Naive thymus-derived CD4-positive, alpha-beta T cell (primary cell): ENCODE measurements at regions of chr3 and their contacts with region 1.

Region 1: DNA sequence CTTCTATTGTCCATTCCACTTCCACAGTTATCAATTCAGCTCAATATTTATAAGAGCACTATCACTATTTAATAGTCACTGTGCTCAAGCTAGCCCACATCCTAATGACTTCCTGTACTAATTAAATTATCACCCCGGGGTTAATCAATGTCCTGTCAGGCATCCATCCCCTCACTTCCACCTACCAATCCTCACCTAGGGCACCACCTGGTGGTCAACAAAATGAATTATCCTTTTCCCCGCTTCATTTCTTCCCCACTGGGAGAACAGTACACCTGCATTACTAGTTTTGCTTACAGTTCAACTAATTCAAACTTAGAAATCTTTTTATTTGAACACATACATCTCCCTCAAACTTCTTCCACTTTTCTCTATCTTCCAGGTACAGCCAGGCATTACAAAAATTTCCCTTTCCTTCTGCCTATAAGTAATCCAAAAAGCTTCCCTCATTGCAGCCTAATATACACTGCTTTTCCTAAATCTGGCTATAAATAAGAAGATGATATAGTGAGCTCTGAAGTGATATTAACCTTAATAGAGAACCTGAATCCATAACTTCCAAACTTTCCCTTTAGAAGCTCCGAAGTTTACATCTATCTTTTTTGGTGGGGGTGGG is 68.5 kb downstream of the TMCC1 start:
- DNase-seq: peak in 8 of 9 donors; percentile 20 to 52 (median 40)
- ATAC-seq: peak; percentile 53
- H3K4me3 ChIP-seq: no peak overlapping the region
- H3K4me3 Mint-ChIP-seq: no peak overlapping the region
- H3K27ac ChIP-seq: no peak overlapping the region
- H3K27ac Mint-ChIP-seq: no peak overlapping the region
- H3K4me1 ChIP-seq: peaks cover 0 to 7% of the 10 kb centered on the region in 2 donors
- H3K4me1 Mint-ChIP-seq: peaks cover 12 to 26% (median 23%) of the 10 kb centered on the region in 7 donors
- H3K27me3 ChIP-seq: no peaks in the 10 kb centered on the region
- H3K27me3 Mint-ChIP-seq: no peaks in the 10 kb centered on the region

Region 2: GRCh38 chr3:129383292-129383860 is 441.7 kb before region 1 on chr3:
- CTCF ChIA-PET with region 1: no interaction called
- POLR2A ChIA-PET with region 1: no interaction called
- intact Hi-C with region 1: loop called in 1 of 2 experiments (anchors 5 kb)
- DNase-seq: peak in 7 of 9 donors; percentile 21 to 40 (median 30)
- ATAC-seq: peak; percentile 92
- H3K4me3 ChIP-seq: no peak overlapping the region
- H3K4me3 Mint-ChIP-seq: no peak overlapping the region
- H3K27ac ChIP-seq: no peak overlapping the region
- H3K27ac Mint-ChIP-seq: peak overlapping the region in 2 of 9 donors; percentile 49 to 92
- H3K4me1 ChIP-seq: no peaks in the 10 kb centered on the region
- H3K4me1 Mint-ChIP-seq: peaks cover 0 to 4% (median 0%) of the 10 kb centered on the region in 7 donors
- H3K27me3 ChIP-seq: no peaks in the 10 kb centered on the region
- H3K27me3 Mint-ChIP-seq: no peaks in the 10 kb centered on the region

Region 3: GRCh38 chr3:129399145-129399894 is 425.7 kb before region 1 on chr3:
- CTCF ChIA-PET with region 1: no interaction called
- POLR2A ChIA-PET with region 1: no interaction called
- intact Hi-C with region 1: loop called (anchors 5 kb)
- DNase-seq: peak; percentile 34 to 89 (median 81)
- ATAC-seq: peak; percentile 91
- H3K4me3 ChIP-seq: peak overlapping the region; percentile 70
- H3K4me3 Mint-ChIP-seq: peak overlapping the region; percentile 89 to 100 (median 97)
- H3K27ac ChIP-seq: peak overlapping the region; percentile 88
- H3K27ac Mint-ChIP-seq: peak overlapping the region; percentile 94 to 100 (median 98)
- H3K4me1 ChIP-seq: peaks cover 10 to 13% of the 10 kb centered on the region in 2 donors
- H3K4me1 Mint-ChIP-seq: peaks cover 23 to 47% (median 37%) of the 10 kb centered on the region in 7 donors
- H3K27me3 ChIP-seq: no peaks in the 10 kb centered on the region
- H3K27me3 Mint-ChIP-seq: no peaks in the 10 kb centered on the region

Region 4: DNA sequence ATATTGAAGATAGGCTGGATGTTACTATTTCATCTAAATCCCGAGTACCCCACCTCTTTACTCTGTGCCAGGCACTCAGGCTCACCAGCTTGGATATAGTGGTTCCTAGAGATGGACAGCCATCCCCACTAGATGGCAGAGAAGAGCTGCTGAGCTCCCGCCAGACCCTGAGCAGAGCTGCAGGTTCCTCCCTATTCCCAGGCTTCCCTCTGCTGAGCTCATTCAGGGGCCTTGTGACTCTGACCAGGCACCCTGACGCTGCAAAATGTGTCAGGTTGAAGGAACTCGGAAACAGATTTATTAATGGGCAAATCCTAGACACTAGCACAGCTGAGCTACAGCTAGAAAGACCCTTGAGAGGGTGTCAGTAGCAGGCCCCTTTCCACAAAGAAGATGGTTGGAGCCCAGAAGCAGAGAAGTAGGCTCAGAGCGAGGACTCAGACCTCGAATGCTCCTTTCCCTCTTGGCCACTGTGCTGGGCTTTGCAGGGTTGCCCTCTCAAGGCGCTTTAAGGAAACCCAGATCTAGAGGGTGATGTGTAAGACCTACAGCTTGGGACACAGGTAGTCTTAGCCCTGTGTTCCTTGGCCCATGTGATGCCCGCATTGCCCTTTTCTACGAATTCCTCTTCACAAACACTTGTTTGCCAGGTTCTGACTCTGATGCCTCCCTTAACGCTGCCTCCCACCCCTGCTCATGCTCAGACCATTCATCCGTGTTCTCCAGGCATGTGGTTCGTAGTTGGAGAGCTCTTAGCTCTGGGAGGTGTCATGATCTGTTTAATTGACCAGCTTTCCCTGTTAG is 334.6 kb before region 1 on chr3:
- CTCF ChIA-PET with region 1: interaction called, 10 read pairs
- POLR2A ChIA-PET with region 1: no interaction called
- intact Hi-C with region 1: loop called (anchors 1 kb)
- DNase-seq: peak in 8 of 9 donors; percentile 16 to 56 (median 40)
- ATAC-seq: peak; percentile 91
- H3K4me3 ChIP-seq: no peak overlapping the region
- H3K4me3 Mint-ChIP-seq: no peak overlapping the region
- H3K27ac ChIP-seq: no peak overlapping the region
- H3K27ac Mint-ChIP-seq: no peak overlapping the region
- H3K4me1 ChIP-seq: no peaks in the 10 kb centered on the region
- H3K4me1 Mint-ChIP-seq: peaks cover 0 to 3% (median 0%) of the 10 kb centered on the region in 7 donors
- H3K27me3 ChIP-seq: no peaks in the 10 kb centered on the region
- H3K27me3 Mint-ChIP-seq: no peaks in the 10 kb centered on the region

Region 5: DNA sequence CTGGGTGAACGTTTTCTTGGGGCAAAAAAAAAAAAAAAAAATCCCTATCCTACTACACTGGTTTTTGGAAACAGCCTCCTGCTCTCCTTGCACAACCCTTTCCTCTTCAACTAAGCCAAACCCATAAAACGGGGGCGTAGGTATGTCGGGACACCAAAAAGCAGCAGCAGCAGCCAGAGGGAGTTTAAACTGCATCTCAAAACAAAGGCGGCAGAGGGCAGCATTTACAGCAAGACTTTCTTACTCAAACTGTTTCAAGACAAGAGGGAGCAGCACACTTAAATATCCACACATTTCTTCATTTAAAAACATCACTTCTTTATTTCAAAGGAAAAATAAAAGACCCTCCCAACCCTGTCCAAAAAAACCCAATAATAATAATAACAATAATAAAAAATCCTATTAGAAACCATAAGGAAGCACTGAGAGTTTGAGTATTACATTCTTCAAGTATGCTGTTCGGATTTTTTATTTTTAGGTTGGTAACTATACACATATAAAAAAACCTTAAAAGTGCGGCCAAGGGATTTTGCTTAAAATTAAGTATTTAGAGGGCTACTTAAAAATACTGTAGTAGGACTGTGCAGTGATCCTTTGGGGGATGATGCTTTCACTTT is 174.7 kb before region 1 on chr3:
- CTCF ChIA-PET with region 1: interaction called, 3 read pairs
- POLR2A ChIA-PET with region 1: no interaction called
- intact Hi-C with region 1: loop called (anchors 1 kb)
- DNase-seq: peak in 8 of 9 donors; percentile 8 to 57 (median 42)
- ATAC-seq: peak; percentile 62
- H3K4me3 ChIP-seq: no peak overlapping the region
- H3K4me3 Mint-ChIP-seq: no peak overlapping the region
- H3K27ac ChIP-seq: no peak overlapping the region
- H3K27ac Mint-ChIP-seq: peak overlapping the region in 2 of 9 donors; percentile 12 to 38
- H3K4me1 ChIP-seq: no peaks in the 10 kb centered on the region
- H3K4me1 Mint-ChIP-seq: peaks cover 0 to 4% (median 1%) of the 10 kb centered on the region in 7 donors
- H3K27me3 ChIP-seq: no peaks in the 10 kb centered on the region
- H3K27me3 Mint-ChIP-seq: peaks cover 0 to 4% (median 0%) of the 10 kb centered on the region in 5 donors

Region 6: DNA sequence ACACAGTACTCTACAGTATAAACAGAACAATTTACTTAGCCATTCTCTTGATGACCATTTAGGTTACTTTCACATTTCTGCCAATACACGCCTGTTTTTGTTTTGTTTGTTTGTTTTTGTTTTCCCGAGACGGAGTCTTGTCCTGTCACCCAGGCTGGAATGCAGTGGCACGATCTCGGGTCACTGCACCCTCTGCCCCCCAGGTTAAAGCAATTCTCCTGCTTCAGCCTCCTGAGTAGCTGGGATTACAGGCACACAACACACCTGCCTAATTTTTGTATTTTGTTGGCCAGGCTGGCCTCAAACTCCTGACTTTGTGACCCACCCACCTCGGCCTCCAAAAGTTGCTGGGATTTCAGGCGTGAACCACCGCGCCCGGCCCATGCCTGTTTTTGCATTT is 23.7 kb before region 1 on chr3:
- CTCF ChIA-PET with region 1: no interaction called
- POLR2A ChIA-PET with region 1: no interaction called
- intact Hi-C with region 1: no loop called
- DNase-seq: no peak
- ATAC-seq: no peak
- H3K4me3 ChIP-seq: no peak overlapping the region
- H3K4me3 Mint-ChIP-seq: peak overlapping the region in 1 of 10 donors; percentile 23
- H3K27ac ChIP-seq: no peak overlapping the region
- H3K27ac Mint-ChIP-seq: no peak overlapping the region
- H3K4me1 ChIP-seq: no peaks in the 10 kb centered on the region
- H3K4me1 Mint-ChIP-seq: peaks cover 0 to 25% (median 10%) of the 10 kb centered on the region in 7 donors
- H3K27me3 ChIP-seq: no peaks in the 10 kb centered on the region
- H3K27me3 Mint-ChIP-seq: no peaks in the 10 kb centered on the region

Region 7: GRCh38 chr3:129845956-129846355 is 20.9 kb after region 1 on chr3:
- CTCF ChIA-PET with region 1: interaction called, 3 read pairs
- POLR2A ChIA-PET with region 1: no interaction called
- intact Hi-C with region 1: loop called in 1 of 2 experiments (anchors 1 kb)
- DNase-seq: no peak
- ATAC-seq: no peak
- H3K4me3 ChIP-seq: no peak overlapping the region
- H3K4me3 Mint-ChIP-seq: no peak overlapping the region
- H3K27ac ChIP-seq: no peak overlapping the region
- H3K27ac Mint-ChIP-seq: peak overlapping the region in 2 of 9 donors; percentile 39 to 56
- H3K4me1 ChIP-seq: no peaks in the 10 kb centered on the region
- H3K4me1 Mint-ChIP-seq: peaks cover 0 to 30% (median 15%) of the 10 kb centered on the region in 7 donors
- H3K27me3 ChIP-seq: no peaks in the 10 kb centered on the region
- H3K27me3 Mint-ChIP-seq: no peaks in the 10 kb centered on the region

Region 8: GRCh38 chr3:129934234-129935123 is 109.4 kb after region 1 on chr3:
- CTCF ChIA-PET with region 1: interaction called, 7 read pairs
- POLR2A ChIA-PET with region 1: no interaction called
- intact Hi-C with region 1: loop called (anchors 1 to 2 kb)
- DNase-seq: peak in 6 of 9 donors; percentile 18 to 46 (median 26)
- ATAC-seq: peak; percentile 66
- H3K4me3 ChIP-seq: no peak overlapping the region
- H3K4me3 Mint-ChIP-seq: peak overlapping the region in 4 of 10 donors; percentile 10 to 67 (median 27)
- H3K27ac ChIP-seq: no peak overlapping the region
- H3K27ac Mint-ChIP-seq: no peak overlapping the region
- H3K4me1 ChIP-seq: peaks cover 0 to 3% of the 10 kb centered on the region in 2 donors
- H3K4me1 Mint-ChIP-seq: peaks cover 4 to 10% (median 7%) of the 10 kb centered on the region in 7 donors
- H3K27me3 ChIP-seq: no peaks in the 10 kb centered on the region
- H3K27me3 Mint-ChIP-seq: peaks cover 3 to 16% (median 4%) of the 10 kb centered on the region in 5 donors